ENCODE measurements at regions of chr18 and their contacts with region 1.

Region 1: GRCh38 chr18:44709307-44710126 is 28.8 kb downstream of the SETBP1 start:
- DNase-seq: peak; percentile 24
- ATAC-seq: peak; percentile 45
- H3K4me3 ChIP-seq: no peak overlapping the region
- H3K4me3 Mint-ChIP-seq: peak overlapping the region; percentile 63
- H3K27ac ChIP-seq: peak overlapping the region in 1 of 2 donors; percentile 40
- H3K27ac Mint-ChIP-seq: peak overlapping the region; percentile 91
- H3K4me1 ChIP-seq: peaks cover 11 to 33% of the 10 kb centered on the region in 2 donors
- H3K4me1 Mint-ChIP-seq: peaks cover 60% of the 10 kb centered on the region
- H3K27me3 ChIP-seq: no peaks in the 10 kb centered on the region
- H3K27me3 Mint-ChIP-seq: no peaks in the 10 kb centered on the region
- CTCF ChIP-seq: no peak

Region 2: GRCh38 chr18:44733069-44733753 is 23.7 kb after region 1 on chr18:
- CTCF ChIA-PET with region 1: no interaction called
- POLR2A ChIA-PET with region 1: no interaction called
- intact Hi-C with region 1: loop called (anchors 2 kb)
- DNase-seq: no peak
- ATAC-seq: no peak
- H3K4me3 ChIP-seq: no peak overlapping the region
- H3K4me3 Mint-ChIP-seq: peak overlapping the region; percentile 44
- H3K27ac ChIP-seq: no peak overlapping the region
- H3K27ac Mint-ChIP-seq: peak overlapping the region; percentile 54
- H3K4me1 ChIP-seq: peaks cover 69 to 78% of the 10 kb centered on the region in 2 donors
- H3K4me1 Mint-ChIP-seq: peaks cover 93% of the 10 kb centered on the region
- H3K27me3 ChIP-seq: no peaks in the 10 kb centered on the region
- H3K27me3 Mint-ChIP-seq: no peaks in the 10 kb centered on the region
- CTCF ChIP-seq: no peak

Region 3: GRCh38 chr18:44766450-44766849 is 56.9 kb after region 1 on chr18:
- CTCF ChIA-PET with region 1: no interaction called
- POLR2A ChIA-PET with region 1: no interaction called
- intact Hi-C with region 1: no loop called
- DNase-seq: no peak
- ATAC-seq: no peak
- H3K4me3 ChIP-seq: no peak overlapping the region
- H3K4me3 Mint-ChIP-seq: no peak overlapping the region
- H3K27ac ChIP-seq: peak overlapping the region in 1 of 2 donors; percentile 87
- H3K27ac Mint-ChIP-seq: peak overlapping the region; percentile 78
- H3K4me1 ChIP-seq: peaks cover 84% of the 10 kb centered on the region in 2 donors
- H3K4me1 Mint-ChIP-seq: peaks cover 94% of the 10 kb centered on the region
- H3K27me3 ChIP-seq: no peaks in the 10 kb centered on the region
- H3K27me3 Mint-ChIP-seq: no peaks in the 10 kb centered on the region
- CTCF ChIP-seq: no peak